A673 (cell line): ENCODE measurements at regions of chr7 and their contacts with region 1.

Region 1: DNA sequence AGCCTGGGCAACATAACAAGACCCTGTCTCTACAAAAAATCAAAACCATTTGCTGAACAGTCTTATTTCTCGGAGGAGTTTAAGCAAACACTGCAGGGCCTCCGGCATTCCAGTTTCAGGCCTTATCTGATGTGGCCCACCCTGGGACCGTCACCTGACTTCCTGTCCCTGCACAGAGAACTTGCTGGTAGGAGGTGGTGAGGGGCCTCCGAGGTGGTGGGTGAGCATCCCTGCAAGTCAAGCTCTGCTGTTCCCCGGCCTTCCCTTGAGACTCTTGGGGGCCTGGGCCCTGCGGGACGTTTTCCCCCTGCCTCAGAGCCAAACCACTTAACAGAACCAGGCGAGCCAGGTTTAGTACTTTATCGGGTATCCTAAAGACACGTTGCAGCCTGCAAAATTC is 44.5 kb upstream of the AP5Z1 start:
- DNase-seq: no peak
- H3K4me3 ChIP-seq: no peak overlapping the region
- H3K27ac ChIP-seq: peak overlapping the region; percentile 16
- H3K4me1 ChIP-seq: no peaks in the 10 kb centered on the region
- H3K27me3 ChIP-seq: no peaks in the 10 kb centered on the region
- CTCF ChIP-seq: no peak

Region 2: GRCh38 chr7:4713183-4713784 is 17.7 kb before region 1 on chr7:
- CTCF ChIA-PET with region 1: no interaction called
- POLR2A ChIA-PET with region 1: interaction called, 13 read pairs
- intact Hi-C with region 1: no loop called
- DNase-seq: no peak
- H3K4me3 ChIP-seq: no peak overlapping the region
- H3K27ac ChIP-seq: no peak overlapping the region
- H3K4me1 ChIP-seq: peaks cover 38% of the 10 kb centered on the region
- H3K27me3 ChIP-seq: no peaks in the 10 kb centered on the region
- CTCF ChIP-seq: no peak